ENCODE measurements at regions of chr2 and their contacts with region 1.

Region 1: GRCh38 chr2:113181258-113182051 is 7.7 kb downstream of the PSD4 start:
- DNase-seq: peak in 2 of 9 donors; percentile 24 to 34
- ATAC-seq: peak; percentile 51
- H3K4me3 ChIP-seq: peak overlapping the region; percentile 43
- H3K4me3 Mint-ChIP-seq: peak overlapping the region; percentile 47 to 97 (median 76)
- H3K27ac ChIP-seq: peak overlapping the region; percentile 58
- H3K27ac Mint-ChIP-seq: peak overlapping the region; percentile 77 to 96 (median 93)
- H3K4me1 ChIP-seq: peaks cover 83 to 95% of the 10 kb centered on the region in 2 donors
- H3K4me1 Mint-ChIP-seq: peaks cover 79 to 98% (median 93%) of the 10 kb centered on the region in 7 donors
- H3K27me3 ChIP-seq: no peaks in the 10 kb centered on the region
- H3K27me3 Mint-ChIP-seq: no peaks in the 10 kb centered on the region

Region 2: GRCh38 chr2:113198790-113199612 is 17.5 kb after region 1 on chr2:
- CTCF ChIA-PET with region 1: interaction called, 41 read pairs
- POLR2A ChIA-PET with region 1: interaction called, 11 read pairs
- intact Hi-C with region 1: no loop called
- DNase-seq: peak; percentile 57 to 86 (median 70)
- ATAC-seq: peak; percentile 88
- H3K4me3 ChIP-seq: no peak overlapping the region
- H3K4me3 Mint-ChIP-seq: no peak overlapping the region
- H3K27ac ChIP-seq: peak overlapping the region; percentile 44
- H3K27ac Mint-ChIP-seq: peak overlapping the region in 5 of 9 donors; percentile 36 to 75 (median 62)
- H3K4me1 ChIP-seq: peaks cover under 1 to 7% of the 10 kb centered on the region in 2 donors
- H3K4me1 Mint-ChIP-seq: peaks cover 3 to 54% (median 9%) of the 10 kb centered on the region in 7 donors
- H3K27me3 ChIP-seq: no peaks in the 10 kb centered on the region
- H3K27me3 Mint-ChIP-seq: no peaks in the 10 kb centered on the region

Region 3: DNA sequence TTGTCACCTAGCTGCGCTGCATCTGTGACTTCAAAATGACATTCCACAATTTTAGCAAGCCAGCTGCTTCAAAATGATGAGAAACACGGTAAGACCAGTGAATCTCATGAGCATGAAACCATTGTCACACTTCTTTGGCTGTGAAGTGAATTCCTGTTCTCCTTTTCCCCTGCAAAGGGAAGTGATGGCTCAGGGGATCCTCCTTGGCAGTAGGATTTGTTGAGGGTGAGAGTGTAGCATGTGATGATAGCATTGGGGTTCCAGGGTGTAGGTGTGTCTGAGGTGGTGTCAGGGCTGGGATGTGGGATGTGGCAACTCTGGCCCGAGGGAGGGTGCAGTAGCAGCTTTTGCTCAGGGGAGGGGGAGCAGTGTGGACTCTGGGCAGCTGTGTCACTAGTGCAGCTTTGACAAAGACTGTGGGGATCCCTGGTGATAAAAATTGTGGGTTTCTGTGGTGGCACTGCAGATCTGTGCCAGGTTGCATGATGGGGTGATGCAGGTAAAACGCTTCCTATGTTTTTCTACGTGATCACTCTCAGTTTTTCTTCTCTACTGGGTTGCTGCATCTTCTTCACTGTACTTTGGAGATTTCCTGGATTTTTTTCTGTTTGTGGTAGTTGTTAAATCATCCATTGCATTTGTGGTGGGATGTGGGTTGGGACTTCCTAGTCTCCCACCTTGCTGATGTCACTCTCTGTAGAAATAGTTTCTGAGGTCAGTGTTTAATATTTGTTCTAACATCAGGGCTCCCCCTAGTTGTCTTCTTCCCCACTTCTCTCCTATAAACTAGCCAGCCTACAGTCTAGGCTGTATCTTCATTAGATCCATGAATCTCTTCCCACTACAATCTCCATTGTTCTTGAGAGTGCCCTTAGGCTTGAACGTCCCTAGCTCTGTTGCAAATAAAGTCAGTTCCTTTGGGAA is 815.5 kb after region 1 on chr2:
- CTCF ChIA-PET with region 1: no interaction called
- POLR2A ChIA-PET with region 1: no interaction called
- intact Hi-C with region 1: no loop called
- DNase-seq: no peak
- ATAC-seq: no peak
- H3K4me3 ChIP-seq: no peak overlapping the region
- H3K4me3 Mint-ChIP-seq: no peak overlapping the region
- H3K27ac ChIP-seq: no peak overlapping the region
- H3K27ac Mint-ChIP-seq: no peak overlapping the region
- H3K4me1 ChIP-seq: no peaks in the 10 kb centered on the region
- H3K4me1 Mint-ChIP-seq: no peaks in the 10 kb centered on the region
- H3K27me3 ChIP-seq: no peaks in the 10 kb centered on the region
- H3K27me3 Mint-ChIP-seq: peaks cover 0 to 6% (median 0%) of the 10 kb centered on the region in 5 donors